Right lobe of liver (tissue), 6 donors: ENCODE measurements at regions of chr13 and their contacts with region 1.

Region 1: DNA sequence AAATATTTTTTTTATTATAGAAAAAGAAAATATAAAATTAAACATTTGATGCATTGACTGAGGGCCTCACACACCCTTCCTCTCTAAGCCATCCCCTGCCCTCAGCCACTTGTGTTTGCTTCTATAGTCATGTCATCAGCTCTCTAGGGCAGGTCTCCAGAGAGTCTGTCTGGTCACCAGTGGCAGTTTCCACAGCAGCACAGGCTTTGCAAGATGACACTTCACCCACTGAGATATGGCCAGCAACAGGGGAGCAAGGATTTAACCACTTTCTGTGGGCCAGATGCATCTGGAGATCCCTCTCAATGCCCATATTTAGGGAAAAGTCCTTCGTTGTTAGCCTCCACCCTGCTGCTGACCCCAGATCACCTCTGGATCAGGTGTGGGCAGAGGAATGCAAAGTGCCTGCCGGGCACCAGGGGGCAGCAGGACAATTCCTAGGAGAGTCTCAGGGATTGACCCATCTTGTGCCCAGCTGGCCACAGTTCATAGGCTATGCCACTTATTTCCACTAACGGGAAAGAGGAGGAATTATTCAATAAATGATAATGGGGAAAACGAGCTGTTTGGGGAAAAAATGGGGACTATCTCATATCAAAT is 4.8 kb downstream of the ABCC4 start:
- DNase-seq: peak; percentile 77 to 84 (median 84)
- ATAC-seq: peak; percentile 88 to 91 (median 88)
- H3K4me3 ChIP-seq: no peak overlapping the region
- H3K27ac ChIP-seq: peak overlapping the region in 2 of 3 donors; percentile 68 to 89
- H3K4me1 ChIP-seq: peaks cover 0 to 16% (median 7%) of the 10 kb centered on the region in 4 donors
- H3K27me3 ChIP-seq: no peaks in the 10 kb centered on the region
- CTCF ChIP-seq: peak; percentile 73 to 90 (median 84)
- POLR2A ChIP-seq: no peak

Region 2: DNA sequence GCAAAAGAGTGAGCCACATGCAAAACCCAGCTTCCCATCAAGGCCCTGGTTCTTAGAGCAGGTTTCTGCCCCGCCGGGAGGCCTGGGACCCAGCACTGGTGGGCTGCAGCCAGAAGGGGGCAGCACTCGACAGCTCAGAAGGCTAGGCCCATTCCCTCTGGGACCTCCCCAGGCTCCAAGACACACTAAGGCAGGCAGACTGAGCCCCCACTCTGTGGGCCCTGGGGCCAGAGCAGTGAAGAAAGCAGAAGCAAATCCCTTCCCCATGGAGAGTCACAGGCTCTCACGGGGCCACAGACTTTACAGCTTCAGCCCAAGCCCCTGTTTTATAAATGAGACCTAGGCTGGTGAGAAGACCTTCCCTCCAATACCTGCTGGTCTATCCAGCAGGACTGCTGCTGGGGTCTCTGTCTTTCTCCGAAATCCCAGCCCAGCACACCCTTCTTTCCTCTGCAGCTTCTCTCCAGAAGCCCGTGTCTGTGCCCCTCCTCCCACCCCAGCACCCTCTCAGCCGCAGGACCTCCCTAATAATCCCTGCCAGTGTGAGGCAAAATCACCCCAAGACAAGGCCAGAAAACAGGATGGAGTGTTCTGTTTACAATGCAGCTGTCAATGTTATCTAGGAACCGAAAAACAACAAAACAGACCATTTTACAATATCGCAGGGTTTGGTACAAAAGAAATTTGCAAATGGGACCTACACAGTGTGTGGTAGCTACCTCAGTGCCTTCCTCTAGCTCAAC is 104.4 kb before region 1 on chr13:
- intact Hi-C with region 1: no loop called
- DNase-seq: peak; percentile 63 to 73 (median 72)
- ATAC-seq: peak; percentile 57 to 74 (median 68)
- H3K4me3 ChIP-seq: no peak overlapping the region
- H3K27ac ChIP-seq: peak overlapping the region in 1 of 3 donors; percentile 71
- H3K4me1 ChIP-seq: peaks cover 0 to 13% (median 2%) of the 10 kb centered on the region in 4 donors
- H3K27me3 ChIP-seq: no peaks in the 10 kb centered on the region
- CTCF ChIP-seq: peak; percentile 65 to 80 (median 70)
- POLR2A ChIP-seq: no peak

Region 3: DNA sequence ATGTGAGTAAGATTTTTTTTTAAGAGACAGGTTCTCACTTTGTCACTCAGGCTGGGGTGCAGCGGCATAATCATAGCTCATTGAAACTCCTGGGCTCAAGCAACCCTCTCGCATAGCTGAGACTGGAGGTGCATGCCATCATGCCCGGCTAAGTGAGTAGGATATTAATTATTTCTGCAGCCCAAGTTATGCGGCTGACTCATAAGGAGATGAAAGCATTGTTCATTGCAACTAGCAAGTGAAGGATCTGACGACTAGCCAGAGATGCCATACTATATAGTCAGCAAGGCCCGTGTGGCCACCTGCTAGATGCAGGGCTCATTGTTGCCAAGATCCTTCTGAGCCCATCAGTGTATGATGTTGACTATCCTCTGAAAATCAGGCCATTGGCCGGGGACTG is 40.3 kb before region 1 on chr13:
- intact Hi-C with region 1: no loop called
- DNase-seq: no peak
- ATAC-seq: no peak
- H3K4me3 ChIP-seq: no peak overlapping the region
- H3K27ac ChIP-seq: no peak overlapping the region
- H3K4me1 ChIP-seq: no peaks in the 10 kb centered on the region
- H3K27me3 ChIP-seq: no peaks in the 10 kb centered on the region
- CTCF ChIP-seq: no peak
- POLR2A ChIP-seq: no peak

Region 4: GRCh38 chr13:95378603-95379002 is 82.2 kb after region 1 on chr13:
- intact Hi-C with region 1: loop called in 1 of 2 experiments (anchors 5 kb)
- DNase-seq: peak; percentile 49 to 86 (median 74)
- ATAC-seq: peak; percentile 92 to 97 (median 96)
- H3K4me3 ChIP-seq: no peak overlapping the region
- H3K27ac ChIP-seq: peak overlapping the region in 1 of 3 donors; percentile 24
- H3K4me1 ChIP-seq: peaks cover 0 to 11% (median 2%) of the 10 kb centered on the region in 4 donors
- H3K27me3 ChIP-seq: no peaks in the 10 kb centered on the region
- CTCF ChIP-seq: no peak
- POLR2A ChIP-seq: no peak

Region 5: DNA sequence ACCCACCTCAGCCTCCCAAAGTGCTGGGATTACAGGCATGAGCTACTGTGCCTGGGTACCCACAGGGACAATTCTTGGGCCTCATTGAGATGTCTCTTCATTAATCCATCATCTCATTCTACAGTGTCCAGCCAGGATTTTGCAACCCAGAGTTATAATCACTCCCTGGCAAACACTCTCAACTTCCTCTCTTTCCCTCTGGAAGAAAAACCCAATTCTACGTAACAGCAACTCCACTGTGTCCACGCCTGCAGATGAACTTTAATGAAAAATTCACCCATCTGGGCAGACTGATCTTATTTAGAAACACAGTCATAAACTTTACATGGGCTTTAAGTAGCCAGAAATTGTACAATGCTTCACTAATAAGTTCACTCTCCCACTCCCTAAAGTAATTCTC is 94.9 kb after region 1 on chr13:
- intact Hi-C with region 1: no loop called
- DNase-seq: no peak
- ATAC-seq: no peak
- H3K4me3 ChIP-seq: no peak overlapping the region
- H3K27ac ChIP-seq: no peak overlapping the region
- H3K4me1 ChIP-seq: no peaks in the 10 kb centered on the region
- H3K27me3 ChIP-seq: no peaks in the 10 kb centered on the region
- CTCF ChIP-seq: no peak
- POLR2A ChIP-seq: no peak

Region 6: DNA sequence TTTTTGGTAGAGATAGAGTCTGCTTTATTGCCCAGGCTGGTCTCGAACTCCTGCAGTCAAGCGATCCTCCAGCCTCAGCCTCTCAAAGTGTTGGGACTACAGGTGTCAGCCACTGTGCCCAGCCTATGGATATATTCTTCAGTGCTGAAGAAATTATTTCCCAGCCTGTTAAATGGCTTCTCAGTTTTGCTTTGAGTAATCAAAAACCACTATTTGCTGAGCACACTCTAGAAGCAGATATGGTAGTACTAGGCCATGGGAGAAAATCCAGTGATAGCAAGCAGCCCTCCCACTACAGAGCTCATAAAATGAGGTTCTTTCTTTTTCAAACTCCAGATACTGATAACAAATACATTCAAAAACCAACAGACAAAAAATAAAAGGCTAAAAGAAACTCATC is 175.5 kb after region 1 on chr13:
- intact Hi-C with region 1: no loop called
- DNase-seq: no peak
- ATAC-seq: no peak
- H3K4me3 ChIP-seq: no peak overlapping the region
- H3K27ac ChIP-seq: no peak overlapping the region
- H3K4me1 ChIP-seq: no peaks in the 10 kb centered on the region
- H3K27me3 ChIP-seq: no peaks in the 10 kb centered on the region
- CTCF ChIP-seq: no peak
- POLR2A ChIP-seq: no peak